ENCODE measurements at regions of chr2 and their contacts with region 1.

Region 1: GRCh38 chr2:62787386-62787785 is 81.9 kb downstream of the EHBP1 start:
- DNase-seq: peak; percentile 59
- ATAC-seq: peak; percentile 89
- H3K4me3 ChIP-seq: no peak overlapping the region
- H3K27ac ChIP-seq: no peak overlapping the region
- H3K4me1 ChIP-seq: peaks cover 11% of the 10 kb centered on the region; the same call in 1 of the 2 replicates
- H3K27me3 ChIP-seq: no peaks in the 10 kb centered on the region
- CTCF ChIP-seq: peak; percentile 63

Region 2: GRCh38 chr2:63023444-63023843 is 236.1 kb after region 1 on chr2:
- CTCF ChIA-PET with region 1: no interaction called
- POLR2A ChIA-PET with region 1: no interaction called
- intact Hi-C with region 1: loop called (anchors 1 kb)
- DNase-seq: peak; percentile 76
- ATAC-seq: peak; percentile 81
- H3K4me3 ChIP-seq: no peak overlapping the region
- H3K27ac ChIP-seq: no peak overlapping the region
- H3K4me1 ChIP-seq: no peaks in the 10 kb centered on the region
- H3K27me3 ChIP-seq: no peaks in the 10 kb centered on the region
- CTCF ChIP-seq: peak; percentile 76

Region 3: GRCh38 chr2:63424329-63425078 is 637.1 kb after region 1 on chr2:
- CTCF ChIA-PET with region 1: no interaction called
- POLR2A ChIA-PET with region 1: no interaction called
- intact Hi-C with region 1: loop called (anchors 2 kb)
- DNase-seq: peak; percentile 85
- ATAC-seq: peak; percentile 93
- H3K4me3 ChIP-seq: no peak overlapping the region
- H3K27ac ChIP-seq: no peak overlapping the region
- H3K4me1 ChIP-seq: no peaks in the 10 kb centered on the region
- H3K27me3 ChIP-seq: no peaks in the 10 kb centered on the region
- CTCF ChIP-seq: peak; percentile 86

Region 4: GRCh38 chr2:63488118-63488713 is 700.8 kb after region 1 on chr2:
- CTCF ChIA-PET with region 1: no interaction called
- POLR2A ChIA-PET with region 1: no interaction called
- intact Hi-C with region 1: loop called (anchors 1 kb)
- DNase-seq: peak; percentile 51
- ATAC-seq: peak; percentile 53
- H3K4me3 ChIP-seq: no peak overlapping the region
- H3K27ac ChIP-seq: no peak overlapping the region
- H3K4me1 ChIP-seq: no peaks in the 10 kb centered on the region
- H3K27me3 ChIP-seq: no peaks in the 10 kb centered on the region
- CTCF ChIP-seq: peak; percentile 87

Region 5: DNA sequence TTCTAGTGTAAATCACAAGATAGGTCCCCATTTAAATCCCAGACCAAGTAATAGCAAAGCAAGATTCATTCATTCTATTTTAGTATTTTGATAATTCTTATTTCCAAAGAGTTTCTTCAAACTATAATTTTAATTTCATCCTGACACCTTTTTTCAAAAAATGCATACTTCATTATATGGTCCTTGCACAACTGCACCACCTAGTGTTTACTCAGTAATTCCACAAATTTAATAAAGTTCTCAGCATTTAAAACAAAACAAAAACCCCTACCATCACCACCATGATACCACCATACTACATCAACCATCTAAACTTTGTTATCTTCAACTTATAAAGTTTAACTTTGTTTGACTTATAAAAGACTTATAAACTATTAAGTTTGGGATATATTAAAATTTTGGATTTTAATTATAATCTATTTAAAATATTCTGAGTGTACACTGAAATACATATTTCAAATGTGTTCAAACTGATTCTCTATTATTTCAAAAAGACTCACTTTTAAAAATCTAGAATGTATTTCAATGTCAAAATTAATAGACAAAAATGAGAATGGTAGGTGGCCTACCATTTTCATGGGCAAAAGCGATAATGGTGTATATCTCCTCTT is 756.7 kb after region 1 on chr2:
- CTCF ChIA-PET with region 1: no interaction called
- POLR2A ChIA-PET with region 1: no interaction called
- intact Hi-C with region 1: loop called (anchors 10 kb)
- DNase-seq: peak; percentile 28
- ATAC-seq: no peak; the same call in 1 of the 2 replicates
- H3K4me3 ChIP-seq: no peak overlapping the region
- H3K27ac ChIP-seq: no peak overlapping the region
- H3K4me1 ChIP-seq: no peaks in the 10 kb centered on the region
- H3K27me3 ChIP-seq: no peaks in the 10 kb centered on the region
- CTCF ChIP-seq: peak; percentile 79